ENCODE measurements at regions of chr20 and their contacts with region 1.

Region 1: GRCh38 chr20:36861875-36862801 is 13.8 kb upstream of the TLDC2 start:
- DNase-seq: peak; percentile 55 to 88 (median 86)
- H3K4me3 ChIP-seq: peak overlapping the region; percentile 48 to 85 (median 69)
- H3K27ac ChIP-seq: peak overlapping the region; percentile 76 to 96 (median 91)
- H3K27me3 ChIP-seq: no peaks in the 10 kb centered on the region
- CTCF ChIP-seq: peak in 9 of 56 donors; percentile 3 to 33 (median 9)

Region 2: GRCh38 chr20:36605399-36606157 is 256.6 kb before region 1 on chr20 and contains the start of gene RAB5IF:
- intact Hi-C with region 1: loop called (anchors 5 to 10 kb)
- DNase-seq: peak; percentile 94 to 99 (median 96)
- H3K4me3 ChIP-seq: peak within 1 kb of the TSS; percentile 68 to 100 (median 98)
- H3K27ac ChIP-seq: peak within 1 kb of the TSS; percentile 73 to 99 (median 90)
- H3K27me3 ChIP-seq: no peaks in the 10 kb centered on the region
- CTCF ChIP-seq: peak; percentile 88 to 100 (median 96)
- total RNA-seq, gene RAB5IF: 26.9 to 62.3 (median 46.7) TPM

Region 3: GRCh38 chr20:36629719-36630681 is 232.1 kb before region 1 on chr20:
- intact Hi-C with region 1: no loop called
- DNase-seq: no peak
- H3K4me3 ChIP-seq: no peak overlapping the region
- H3K27ac ChIP-seq: no peak overlapping the region
- H3K27me3 ChIP-seq: no peaks in the 10 kb centered on the region
- CTCF ChIP-seq: no peak

Region 4: GRCh38 chr20:36745927-36746659 is 116.0 kb before region 1 on chr20 and contains the start of gene NDRG3:
- intact Hi-C with region 1: loop called in 1 of 2 experiments (anchors 2 kb)
- DNase-seq: peak; percentile 89 to 96 (median 94)
- H3K4me3 ChIP-seq: peak within 1 kb of the TSS; percentile 62 to 93 (median 85)
- H3K27ac ChIP-seq: peak within 1 kb of the TSS; percentile 24 to 97 (median 88)
- H3K27me3 ChIP-seq: no peaks in the 10 kb centered on the region
- CTCF ChIP-seq: peak in 31 of 56 donors; percentile 3 to 55 (median 27)
- total RNA-seq, gene NDRG3: 75.7 to 191 (median 144) TPM

Region 5: DNA sequence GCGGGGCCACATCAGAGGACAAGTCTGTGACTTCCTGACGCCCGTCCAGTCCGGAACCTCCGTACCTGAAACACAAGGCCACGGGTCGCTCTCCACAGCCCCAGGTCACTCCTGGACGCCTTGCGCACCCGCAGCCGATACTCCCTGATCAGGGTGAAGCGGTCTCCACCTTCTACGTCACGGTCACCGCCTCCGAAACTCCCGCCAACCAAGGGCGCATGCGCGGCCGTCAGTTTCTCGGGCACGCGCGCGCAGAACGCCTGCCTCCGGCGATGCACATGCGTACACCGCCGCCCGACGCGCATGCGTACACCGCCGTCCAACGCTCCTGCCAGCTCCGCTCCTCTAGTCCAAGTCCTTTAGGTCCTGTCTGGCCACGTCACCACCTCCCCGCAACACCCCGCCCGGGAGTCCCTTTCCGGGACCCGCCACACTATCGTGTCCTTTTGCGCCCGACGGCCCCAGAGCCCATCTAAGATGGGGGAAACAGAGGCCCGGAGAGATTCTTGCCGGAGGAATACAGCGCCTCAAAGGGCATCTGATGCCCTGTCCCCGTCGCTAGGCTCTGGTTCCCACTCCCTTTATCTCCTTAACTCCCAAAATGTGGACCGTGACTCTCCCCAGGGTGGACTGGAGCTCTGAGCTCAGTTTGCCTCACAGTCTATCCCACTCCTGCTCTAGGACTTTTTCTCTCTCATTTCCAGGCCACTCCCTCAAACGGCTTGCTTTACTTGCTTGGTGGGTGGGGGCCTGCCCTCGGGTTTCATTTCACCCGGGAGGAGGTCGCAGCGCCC is 88.3 kb before region 1 on chr20 and contains the start of gene DSN1:
- intact Hi-C with region 1: loop called (anchors 2 to 5 kb)
- DNase-seq: peak; percentile 87 to 94 (median 91)
- H3K4me3 ChIP-seq: peak within 1 kb of the TSS; percentile 57 to 100 (median 84)
- H3K27ac ChIP-seq: peak within 1 kb of the TSS; percentile 36 to 97 (median 91)
- H3K27me3 ChIP-seq: no peaks in the 10 kb centered on the region
- CTCF ChIP-seq: peak in 27 of 56 donors; percentile 1 to 65 (median 45)
- total RNA-seq, gene DSN1: 4.1 to 15.2 (median 8.6) TPM

Region 6: GRCh38 chr20:36821964-36822437 is 40.1 kb before region 1 on chr20:
- intact Hi-C with region 1: loop called (anchors 5 to 10 kb)
- DNase-seq: peak in 9 of 10 donors; percentile 40 to 79 (median 54)
- H3K4me3 ChIP-seq: no peak overlapping the region
- H3K27ac ChIP-seq: peak overlapping the region; percentile 10 to 93 (median 86)
- H3K27me3 ChIP-seq: no peaks in the 10 kb centered on the region
- CTCF ChIP-seq: no peak

Region 7: DNA sequence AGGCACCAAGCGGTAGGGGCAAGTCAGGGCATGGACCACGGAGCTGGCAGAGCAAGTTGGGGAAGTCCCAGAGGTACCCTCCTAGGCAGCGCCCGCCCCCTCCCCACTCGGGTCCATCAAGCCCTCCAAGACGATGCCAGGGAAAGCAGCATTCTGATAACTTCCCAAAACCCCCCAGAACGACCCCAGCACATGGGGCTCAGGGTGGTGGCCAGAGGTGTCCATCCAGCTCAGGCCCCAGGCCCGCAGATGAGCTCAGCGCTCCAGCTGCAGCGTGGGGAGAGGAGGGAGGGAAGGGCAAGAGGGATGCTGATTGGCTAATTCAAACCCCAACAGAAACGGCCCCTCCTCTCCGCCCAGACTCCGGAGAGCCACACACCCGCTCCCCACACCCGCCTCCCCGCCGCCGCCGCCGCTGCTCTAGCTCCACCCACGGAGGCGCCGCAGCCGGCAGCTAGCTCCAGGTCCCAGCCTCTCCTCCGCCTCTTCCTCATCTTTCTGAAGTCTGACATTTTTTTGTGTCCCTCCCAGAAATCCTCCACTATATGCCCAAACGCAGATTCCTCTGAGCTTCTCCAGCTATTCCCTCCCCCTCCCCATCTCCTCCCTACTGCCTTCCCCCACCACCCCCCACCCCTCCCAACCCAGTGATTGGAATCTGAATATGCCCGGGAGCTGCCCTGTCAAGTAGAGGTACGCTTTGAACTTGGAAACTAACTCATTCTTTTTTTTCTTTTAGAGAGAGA is 26.5 kb before region 1 on chr20:
- intact Hi-C with region 1: loop called in 1 of 2 experiments (anchors 2 kb)
- DNase-seq: peak; percentile 86 to 97 (median 94)
- H3K4me3 ChIP-seq: peak overlapping the region in 58 of 59 donors; percentile 2 to 64 (median 44)
- H3K27ac ChIP-seq: peak overlapping the region; percentile 61 to 98 (median 95)
- H3K27me3 ChIP-seq: no peaks in the 10 kb centered on the region
- CTCF ChIP-seq: peak in 23 of 56 donors; percentile 9 to 51 (median 26)

Measured in dorsolateral prefrontal cortex (tissue), 120 donors.